ENCODE measurements at regions of chr3 and their contacts with region 1.

Region 1: DNA sequence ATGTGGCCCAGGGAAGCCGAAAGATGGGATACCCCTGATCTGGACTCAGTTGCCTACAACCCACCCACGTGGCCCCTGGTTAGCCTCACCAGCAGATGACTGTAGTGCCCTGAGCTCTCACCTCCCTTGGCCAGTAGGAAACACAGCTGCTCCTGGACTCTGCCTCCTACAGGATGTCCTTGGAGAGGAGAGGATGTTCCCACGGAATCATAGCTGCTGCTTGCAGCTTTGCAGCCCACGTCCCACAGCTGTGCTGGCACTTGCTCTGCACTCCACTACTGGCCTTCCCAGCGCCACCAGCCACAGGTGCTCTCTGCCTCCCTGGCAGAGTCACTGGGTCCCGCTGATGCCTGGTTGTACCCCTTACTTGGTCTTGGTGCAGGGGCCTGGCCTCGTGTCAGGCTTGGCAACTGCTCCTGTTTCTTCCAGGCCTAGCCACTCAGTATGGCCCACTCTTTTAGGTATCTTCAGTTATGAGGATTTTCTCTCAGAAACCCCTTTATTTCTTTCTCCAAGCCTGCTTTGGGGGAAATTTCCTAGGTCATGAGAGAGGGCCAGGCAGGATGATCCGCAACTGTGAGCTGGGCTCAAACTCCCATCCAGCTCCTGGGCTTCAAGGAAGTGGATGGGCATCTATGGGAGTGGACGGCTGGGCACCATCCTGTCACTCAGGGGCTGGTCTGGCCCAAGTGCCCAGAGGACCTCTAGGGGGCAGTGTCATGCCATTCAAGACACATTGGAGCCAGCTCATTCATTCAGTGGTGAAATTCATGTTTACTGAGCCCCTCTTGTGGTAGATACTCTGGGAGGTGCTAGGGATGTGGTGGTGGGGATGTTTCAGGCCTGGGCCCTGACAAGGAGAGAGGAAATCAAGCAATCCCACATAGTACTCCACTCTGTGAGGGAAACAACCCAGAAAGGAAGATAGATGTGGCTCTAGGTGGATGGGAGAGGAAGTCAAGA is 16.2 kb upstream of the VILL start:
- DNase-seq: peak; percentile 82
- ATAC-seq: peak; percentile 96
- H3K4me3 Mint-ChIP-seq: no peak overlapping the region
- H3K27ac Mint-ChIP-seq: no peak overlapping the region
- H3K4me1 Mint-ChIP-seq: peaks cover 9% of the 10 kb centered on the region
- H3K27me3 Mint-ChIP-seq: peaks cover 2% of the 10 kb centered on the region

Region 2: DNA sequence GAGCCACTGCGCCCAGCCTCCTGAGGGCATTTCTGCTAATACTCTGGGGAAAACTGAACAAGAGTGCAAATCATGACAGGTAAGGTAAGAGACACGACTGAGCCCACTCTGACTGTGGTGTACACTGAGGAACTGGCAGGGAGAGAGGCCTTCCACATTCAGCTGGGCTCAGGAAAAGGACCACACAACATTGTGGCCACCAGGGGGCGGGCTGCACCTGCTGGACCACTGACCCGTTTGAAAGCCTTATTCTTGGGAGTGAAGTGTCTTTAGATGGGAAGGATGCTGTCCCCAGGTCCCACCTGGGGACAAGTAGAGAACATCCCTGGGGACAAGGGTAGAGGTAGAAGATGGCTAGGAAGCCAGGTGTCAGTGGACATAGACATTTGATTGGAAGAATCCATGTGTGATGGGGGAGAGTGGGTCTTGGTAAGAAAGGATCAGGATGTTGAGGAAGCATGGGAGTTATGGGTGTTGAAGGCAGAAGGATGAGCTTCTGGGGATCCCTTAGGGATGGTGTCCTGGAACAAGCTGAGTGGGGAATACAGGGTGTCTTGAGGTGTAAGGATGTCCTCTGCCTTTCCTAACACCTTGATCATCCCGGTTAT is 118.9 kb before region 1 on chr3:
- CTCF ChIA-PET with region 1: interaction called, 65 read pairs
- DNase-seq: peak; percentile 82
- ATAC-seq: peak; percentile 42
- H3K4me3 Mint-ChIP-seq: no peak overlapping the region
- H3K27ac Mint-ChIP-seq: no peak overlapping the region
- H3K4me1 Mint-ChIP-seq: peaks cover 8% of the 10 kb centered on the region
- H3K27me3 Mint-ChIP-seq: peaks cover 16% of the 10 kb centered on the region

Region 3: DNA sequence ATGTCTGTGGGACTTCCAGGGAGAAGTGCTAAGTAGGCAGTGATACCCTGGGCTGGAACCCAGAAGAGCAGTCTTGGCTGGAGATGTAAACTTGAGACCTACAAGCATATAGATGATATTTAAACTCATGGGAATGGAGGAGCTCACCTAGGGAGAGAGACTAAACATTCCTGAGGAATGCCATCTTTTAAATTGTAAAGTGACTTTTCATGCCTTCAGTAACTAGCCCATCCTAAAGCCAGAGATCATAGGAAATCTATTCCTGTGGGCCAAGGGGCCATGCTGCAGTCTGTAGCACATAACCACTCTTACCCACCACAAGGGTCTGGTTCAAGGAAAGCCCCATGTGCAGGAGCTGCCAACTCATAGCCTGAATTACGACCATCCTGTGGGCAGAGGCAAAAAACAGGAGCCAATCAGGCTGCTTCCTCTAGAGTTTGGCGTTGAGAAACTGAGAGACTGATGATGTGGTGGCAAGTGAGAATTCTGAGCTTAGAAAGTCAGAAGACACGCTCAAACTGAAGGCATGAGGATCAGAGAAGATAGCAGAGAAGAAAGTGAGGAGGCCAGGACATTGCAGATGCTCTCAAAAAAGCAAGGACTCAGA is 75.2 kb before region 1 on chr3:
- CTCF ChIA-PET with region 1: interaction called, 16 read pairs
- DNase-seq: peak; percentile 78
- ATAC-seq: peak; percentile 77
- H3K4me3 Mint-ChIP-seq: no peak overlapping the region
- H3K27ac Mint-ChIP-seq: peak overlapping the region; percentile 68
- H3K4me1 Mint-ChIP-seq: peaks cover 53% of the 10 kb centered on the region
- H3K27me3 Mint-ChIP-seq: peaks cover 14% of the 10 kb centered on the region

Region 4: GRCh38 chr3:37934631-37935289 is 39.6 kb before region 1 on chr3:
- CTCF ChIA-PET with region 1: no interaction called
- DNase-seq: no peak
- ATAC-seq: no peak
- H3K4me3 Mint-ChIP-seq: no peak overlapping the region
- H3K27ac Mint-ChIP-seq: no peak overlapping the region
- H3K4me1 Mint-ChIP-seq: no peaks in the 10 kb centered on the region
- H3K27me3 Mint-ChIP-seq: peaks cover 36% of the 10 kb centered on the region

Region 5: DNA sequence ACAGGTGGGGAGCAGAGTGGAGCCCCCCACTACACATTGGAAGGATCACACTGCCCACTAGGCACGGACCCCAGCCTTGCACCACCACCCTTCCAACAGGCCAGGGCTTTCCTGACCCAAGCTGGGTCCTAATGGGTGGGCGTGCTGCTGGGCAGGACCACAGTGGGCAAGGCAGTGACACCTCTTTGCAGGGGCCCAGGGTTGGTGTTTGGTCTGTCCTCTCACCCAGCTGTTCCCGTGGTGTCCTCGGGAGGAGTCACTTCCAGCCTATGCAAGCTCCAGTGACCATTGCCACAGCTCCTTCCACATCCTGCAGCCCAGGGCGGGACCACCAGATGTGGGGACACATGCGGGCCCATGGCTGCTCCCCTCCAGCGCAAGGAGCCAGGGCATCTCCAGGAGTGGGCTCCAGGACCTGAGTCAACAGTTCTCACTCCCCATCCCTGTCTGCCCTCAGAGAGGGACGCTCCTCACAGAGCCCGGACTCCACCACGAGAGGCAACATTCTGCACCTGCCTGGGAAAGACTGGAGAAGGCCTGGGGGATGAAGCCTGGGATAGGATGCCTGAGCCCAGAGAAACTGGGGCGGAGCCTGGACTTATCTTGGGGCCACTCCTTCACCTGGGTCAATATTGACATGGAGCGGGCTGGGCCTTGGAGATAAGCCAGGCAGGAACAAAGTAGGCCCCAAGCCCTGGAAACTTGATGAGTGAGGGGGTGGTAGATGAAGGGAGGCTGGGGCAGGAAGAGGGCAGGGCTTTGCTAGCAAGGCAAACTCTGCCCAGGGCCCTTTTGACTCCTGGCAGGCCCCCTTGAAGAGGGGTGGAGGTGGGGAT is 12.3 kb after region 1 on chr3:
- CTCF ChIA-PET with region 1: interaction called, 26 read pairs
- DNase-seq: no peak
- ATAC-seq: no peak
- H3K4me3 Mint-ChIP-seq: no peak overlapping the region
- H3K27ac Mint-ChIP-seq: no peak overlapping the region
- H3K4me1 Mint-ChIP-seq: no peaks in the 10 kb centered on the region
- H3K27me3 Mint-ChIP-seq: no peaks in the 10 kb centered on the region

Region 6: DNA sequence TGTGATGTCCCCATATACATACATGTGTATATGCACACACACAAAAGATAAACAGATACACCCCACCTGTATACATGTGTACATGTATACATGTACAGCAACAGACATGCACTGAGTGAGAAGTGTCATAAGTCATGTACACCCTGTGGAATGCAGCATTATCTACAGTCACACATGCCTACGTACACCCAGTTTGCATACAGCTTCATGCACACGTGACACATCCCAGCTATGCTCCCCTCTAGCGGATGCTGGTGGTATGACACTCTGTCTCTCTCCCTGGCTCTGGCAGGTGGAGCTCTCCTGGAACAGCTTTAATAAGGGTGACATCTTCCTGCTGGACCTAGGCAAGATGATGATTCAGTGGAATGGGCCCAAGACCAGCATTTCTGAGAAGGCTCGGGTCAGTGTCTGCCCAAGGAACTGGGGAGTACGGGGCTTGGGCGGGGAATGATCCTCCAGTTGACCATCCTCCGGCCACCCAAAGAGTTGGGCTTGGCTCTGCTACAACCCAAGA is 22.4 kb after region 1 on chr3:
- CTCF ChIA-PET with region 1: interaction called, 14 read pairs
- DNase-seq: peak; percentile 91
- ATAC-seq: peak; percentile 47
- H3K4me3 Mint-ChIP-seq: no peak overlapping the region
- H3K27ac Mint-ChIP-seq: peak overlapping the region; percentile 93
- H3K4me1 Mint-ChIP-seq: peaks cover 55% of the 10 kb centered on the region
- H3K27me3 Mint-ChIP-seq: no peaks in the 10 kb centered on the region

Region 7: DNA sequence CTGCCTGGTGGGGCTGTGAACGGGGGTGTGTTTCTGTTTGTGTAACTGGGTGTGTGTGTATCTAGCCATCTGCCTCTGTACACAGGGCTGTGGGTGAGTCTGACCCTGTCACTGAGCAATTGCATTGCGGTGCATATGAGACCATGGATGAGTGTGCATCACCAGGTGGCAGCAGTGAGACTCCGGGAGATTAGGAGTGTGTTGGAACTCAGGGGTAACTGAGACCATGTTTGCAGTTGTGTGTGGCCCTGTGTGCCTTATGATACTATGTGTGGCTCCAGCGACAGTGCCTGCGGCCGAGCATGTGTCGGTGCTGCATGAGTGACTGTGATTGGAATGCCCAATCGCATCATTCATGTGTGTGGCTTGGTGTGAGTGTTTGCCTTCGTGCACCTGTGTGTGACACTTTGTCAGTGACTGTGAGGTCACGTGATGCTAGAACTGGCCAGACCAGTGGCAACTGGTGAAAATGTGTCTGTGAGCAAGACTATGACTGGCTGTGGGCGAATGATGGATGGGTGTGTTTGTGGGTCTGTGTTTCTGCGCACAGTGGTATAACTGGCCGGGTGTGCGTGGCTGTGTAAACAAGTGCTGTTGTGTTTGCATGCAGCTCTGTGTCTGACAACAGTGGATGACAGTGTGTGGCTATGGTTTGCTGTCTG is 30.1 kb after region 1 on chr3:
- CTCF ChIA-PET with region 1: interaction called, 25 read pairs
- DNase-seq: peak; percentile 79
- ATAC-seq: peak; percentile 75
- H3K4me3 Mint-ChIP-seq: no peak overlapping the region
- H3K27ac Mint-ChIP-seq: peak overlapping the region; percentile 37
- H3K4me1 Mint-ChIP-seq: peaks cover 15% of the 10 kb centered on the region
- H3K27me3 Mint-ChIP-seq: no peaks in the 10 kb centered on the region

Measured in activated CD8-positive, alpha-beta memory T cell treated with anti-CD3 and anti-CD28 coated beads, Interleukin-2, amount 10 ng/mL, durations not matched to agents 7 days and 5 days (primary cell).